Transverse colon (tissue), 4 donors: ENCODE measurements at regions of chr3 and their contacts with region 1.

Region 1: GRCh38 chr3:3753416-3753815 is 45.8 kb upstream of the LRRN1 start:
- DNase-seq: no peak
- H3K4me3 ChIP-seq: no peak overlapping the region
- H3K27ac ChIP-seq: no peak overlapping the region
- H3K4me1 ChIP-seq: no peaks in the 10 kb centered on the region
- H3K27me3 ChIP-seq: no peaks in the 10 kb centered on the region
- CTCF ChIP-seq: no peak
- EP300 ChIP-seq: no peak
- POLR2A ChIP-seq: no peak

Region 2: GRCh38 chr3:3683261-3683660 is 70.2 kb before region 1 on chr3:
- in situ Hi-C with region 1: no loop called
- intact Hi-C with region 1: loop called (anchors 2 kb)
- DNase-seq: no peak
- H3K4me3 ChIP-seq: no peak overlapping the region
- H3K27ac ChIP-seq: no peak overlapping the region
- H3K4me1 ChIP-seq: no peaks in the 10 kb centered on the region
- H3K27me3 ChIP-seq: no peaks in the 10 kb centered on the region
- CTCF ChIP-seq: no peak
- EP300 ChIP-seq: no peak
- POLR2A ChIP-seq: no peak

Region 3: GRCh38 chr3:3855056-3855455 is 101.6 kb after region 1 on chr3:
- in situ Hi-C with region 1: no loop called
- intact Hi-C with region 1: no loop called
- DNase-seq: no peak
- H3K4me3 ChIP-seq: no peak overlapping the region
- H3K27ac ChIP-seq: no peak overlapping the region
- H3K4me1 ChIP-seq: no peaks in the 10 kb centered on the region
- H3K27me3 ChIP-seq: no peaks in the 10 kb centered on the region
- CTCF ChIP-seq: no peak
- EP300 ChIP-seq: no peak
- POLR2A ChIP-seq: no peak

Region 4: DNA sequence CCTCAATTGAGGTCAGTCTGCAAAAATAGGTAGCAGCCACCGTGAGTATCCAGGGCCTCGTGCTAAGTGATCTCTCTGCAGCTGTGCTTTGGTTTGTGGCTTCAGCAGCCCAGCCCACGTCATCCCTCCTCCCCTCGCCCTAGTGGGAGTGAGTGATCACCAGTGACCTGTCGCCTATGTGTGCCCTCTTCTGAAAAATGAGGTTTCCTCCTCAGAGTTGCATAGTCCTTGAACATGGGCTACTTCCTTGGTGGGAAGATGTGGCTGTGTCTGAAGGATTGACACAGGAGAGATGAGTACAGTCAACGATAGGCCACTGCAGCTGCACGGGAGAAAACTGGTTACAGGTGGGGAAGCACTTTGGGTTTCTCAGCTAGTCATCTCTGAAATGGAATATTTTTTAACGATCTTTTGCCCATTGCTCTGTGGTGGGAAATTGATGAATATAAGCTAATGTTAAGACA is 1081.0 kb after region 1 on chr3:
- in situ Hi-C with region 1: no loop called
- intact Hi-C with region 1: no loop called
- DNase-seq: peak; percentile 72
- H3K4me3 ChIP-seq: no peak overlapping the region
- H3K27ac ChIP-seq: peak overlapping the region in 2 of 4 donors; percentile 16 to 34
- H3K4me1 ChIP-seq: peaks cover 0 to 21% (median 2%) of the 10 kb centered on the region in 4 donors
- H3K27me3 ChIP-seq: no peaks in the 10 kb centered on the region
- CTCF ChIP-seq: no peak
- EP300 ChIP-seq: no peak
- POLR2A ChIP-seq: peak; percentile 11